ENCODE measurements at regions of chr2 and their contacts with region 1.

Region 1: GRCh38 chr2:187499941-187500532 is 52.0 kb upstream of the CALCRL start:
- DNase-seq: peak; percentile 54
- ATAC-seq: peak; percentile 82
- H3K4me3 ChIP-seq: no peak overlapping the region
- H3K27ac ChIP-seq: no peak overlapping the region
- H3K4me1 ChIP-seq: peaks cover 4 to 10% of the 10 kb centered on the region in 2 experiments; a peak in 2 of 4 replicates
- H3K27me3 ChIP-seq: no peaks in the 10 kb centered on the region
- CTCF ChIP-seq: peak; percentile 63 to 94 (median 78)
- POLR2A ChIP-seq: no peak
- RAD21 ChIP-seq: peak; percentile 97

Region 2: GRCh38 chr2:186903216-186903615 is 596.8 kb before region 1 on chr2:
- CTCF ChIA-PET with region 1: interaction called, 3 read pairs
- POLR2A ChIA-PET with region 1: no interaction called
- RAD21 ChIA-PET with region 1: no interaction called
- intact Hi-C with region 1: loop called (anchors 5 kb)
- DNase-seq: no peak
- ATAC-seq: no peak
- H3K4me3 ChIP-seq: no peak overlapping the region
- H3K27ac ChIP-seq: no peak overlapping the region
- H3K4me1 ChIP-seq: no peaks in the 10 kb centered on the region
- H3K27me3 ChIP-seq: no peaks in the 10 kb centered on the region
- CTCF ChIP-seq: peak; percentile 28 to 62 (median 33); a peak in 4 of 6 replicates
- POLR2A ChIP-seq: no peak
- RAD21 ChIP-seq: peak; percentile 60

Region 3: DNA sequence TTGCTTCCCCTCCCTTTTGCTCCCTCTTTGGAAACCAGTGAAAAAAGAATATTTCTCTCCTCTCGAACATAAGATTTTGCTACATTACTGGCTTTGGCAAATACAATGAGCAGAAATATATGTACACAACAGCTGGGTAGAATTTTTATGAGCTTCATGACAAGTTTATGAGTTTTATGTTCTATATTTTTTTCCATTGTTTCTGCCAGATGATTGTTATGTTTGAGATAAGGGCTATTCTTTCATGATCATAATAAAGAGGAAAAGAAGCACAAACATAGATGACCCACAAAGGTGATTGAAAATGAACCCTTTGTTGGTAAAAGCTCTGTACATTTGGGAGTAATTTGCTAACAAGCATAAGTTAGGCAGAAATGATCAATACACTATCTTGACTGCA is 69.0 kb after region 1 on chr2:
- CTCF ChIA-PET with region 1: interaction called, 412 read pairs
- POLR2A ChIA-PET with region 1: no interaction called
- RAD21 ChIA-PET with region 1: interaction called in 1 of 2 experiments, 4 read pairs
- intact Hi-C with region 1: no loop called
- DNase-seq: no peak
- ATAC-seq: no peak
- H3K4me3 ChIP-seq: no peak overlapping the region
- H3K27ac ChIP-seq: no peak overlapping the region
- H3K4me1 ChIP-seq: no peaks in the 10 kb centered on the region
- H3K27me3 ChIP-seq: no peaks in the 10 kb centered on the region
- CTCF ChIP-seq: no peak
- POLR2A ChIP-seq: no peak
- RAD21 ChIP-seq: no peak

Region 4: DNA sequence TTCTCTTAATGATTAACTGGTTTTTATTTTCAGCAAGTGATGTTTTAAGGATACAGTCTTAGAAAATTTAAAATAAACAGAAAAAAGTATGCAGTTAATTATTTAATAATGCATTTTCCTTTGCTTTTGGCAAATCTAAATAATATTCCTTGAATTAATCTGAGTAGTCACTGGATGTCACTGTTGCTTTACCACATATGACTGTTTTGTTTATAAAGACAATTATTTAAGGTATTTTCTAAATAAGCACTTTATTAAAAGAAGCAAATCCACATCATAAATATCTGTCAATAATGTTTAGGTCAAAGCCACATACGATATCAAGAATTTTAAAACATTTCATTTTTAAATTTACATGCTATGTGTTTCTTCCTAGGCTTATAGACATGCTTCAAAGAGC is 94.8 kb after region 1 on chr2:
- CTCF ChIA-PET with region 1: interaction called, 20 read pairs
- POLR2A ChIA-PET with region 1: no interaction called
- RAD21 ChIA-PET with region 1: interaction called in 1 of 2 experiments, 5 read pairs
- intact Hi-C with region 1: no loop called
- DNase-seq: no peak
- ATAC-seq: no peak
- H3K4me3 ChIP-seq: no peak overlapping the region
- H3K27ac ChIP-seq: no peak overlapping the region
- H3K4me1 ChIP-seq: no peaks in the 10 kb centered on the region
- H3K27me3 ChIP-seq: no peaks in the 10 kb centered on the region
- CTCF ChIP-seq: peak in 1 of 3 experiments; percentile 20; a peak in 2 of 6 replicates
- POLR2A ChIP-seq: no peak
- RAD21 ChIP-seq: peak; percentile 58

Region 5: DNA sequence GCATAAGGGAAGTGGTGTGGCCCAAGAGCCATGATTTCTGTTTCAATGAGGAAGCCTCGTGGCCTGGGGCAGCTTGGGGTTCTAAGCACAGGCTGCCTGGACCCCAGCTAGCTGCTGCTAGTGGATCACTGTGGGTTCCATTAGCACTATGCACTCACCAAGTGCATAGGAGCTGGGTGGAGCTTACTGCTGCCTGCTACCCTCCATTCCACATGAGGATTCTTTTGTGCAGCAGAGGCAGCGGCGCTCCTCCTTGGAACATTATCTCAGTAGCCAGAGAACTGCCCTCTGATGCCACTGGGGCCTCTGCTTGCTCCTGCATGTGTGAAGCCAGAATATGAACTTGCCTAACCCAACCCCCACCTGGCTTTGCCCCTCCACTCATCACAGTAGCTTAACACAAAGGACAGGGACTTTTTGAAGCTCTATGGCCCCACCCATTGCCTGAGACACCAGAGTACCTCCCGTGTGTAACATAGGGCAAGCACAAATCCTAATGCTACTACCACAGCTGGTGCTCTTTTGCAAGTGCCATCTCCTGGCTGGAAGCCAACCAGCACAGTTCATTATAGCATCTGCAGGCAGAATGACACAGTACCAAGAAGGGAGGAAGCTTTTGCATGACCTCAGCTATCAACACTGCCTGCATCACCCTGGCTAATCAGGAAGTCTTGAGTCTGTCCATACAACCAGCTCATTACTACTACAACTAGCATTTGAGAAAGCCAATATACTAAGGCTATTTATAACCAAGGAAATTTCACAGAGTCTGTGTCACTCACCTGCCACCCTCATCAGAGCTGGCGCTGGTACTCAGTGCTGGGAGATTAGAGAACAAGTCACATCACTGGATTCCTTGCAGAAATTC is 494.7 kb after region 1 on chr2:
- CTCF ChIA-PET with region 1: no interaction called
- POLR2A ChIA-PET with region 1: no interaction called
- RAD21 ChIA-PET with region 1: no interaction called
- intact Hi-C with region 1: no loop called
- DNase-seq: no peak
- ATAC-seq: no peak; the same call in 1 of the 2 replicates
- H3K4me3 ChIP-seq: no peak overlapping the region
- H3K27ac ChIP-seq: no peak overlapping the region
- H3K4me1 ChIP-seq: peaks cover 7 to 9% of the 10 kb centered on the region in 2 experiments; a peak in 3 of 4 replicates
- H3K27me3 ChIP-seq: no peaks in the 10 kb centered on the region
- CTCF ChIP-seq: no peak
- POLR2A ChIP-seq: no peak
- RAD21 ChIP-seq: no peak

Region 6: GRCh38 chr2:188369365-188369764 is 869.3 kb after region 1 on chr2:
- CTCF ChIA-PET with region 1: no interaction called
- POLR2A ChIA-PET with region 1: no interaction called
- RAD21 ChIA-PET with region 1: no interaction called
- intact Hi-C with region 1: loop called (anchors 10 kb)
- DNase-seq: peak; percentile 35
- ATAC-seq: peak; percentile 94
- H3K4me3 ChIP-seq: no peak overlapping the region
- H3K27ac ChIP-seq: no peak overlapping the region
- H3K4me1 ChIP-seq: peaks cover 0 to 14% of the 10 kb centered on the region in 2 experiments; a peak in 3 of 4 replicates
- H3K27me3 ChIP-seq: no peaks in the 10 kb centered on the region
- CTCF ChIP-seq: peak; percentile 56 to 72 (median 66); a peak in 5 of 6 replicates
- POLR2A ChIP-seq: no peak
- RAD21 ChIP-seq: peak; percentile 69

Region 7: DNA sequence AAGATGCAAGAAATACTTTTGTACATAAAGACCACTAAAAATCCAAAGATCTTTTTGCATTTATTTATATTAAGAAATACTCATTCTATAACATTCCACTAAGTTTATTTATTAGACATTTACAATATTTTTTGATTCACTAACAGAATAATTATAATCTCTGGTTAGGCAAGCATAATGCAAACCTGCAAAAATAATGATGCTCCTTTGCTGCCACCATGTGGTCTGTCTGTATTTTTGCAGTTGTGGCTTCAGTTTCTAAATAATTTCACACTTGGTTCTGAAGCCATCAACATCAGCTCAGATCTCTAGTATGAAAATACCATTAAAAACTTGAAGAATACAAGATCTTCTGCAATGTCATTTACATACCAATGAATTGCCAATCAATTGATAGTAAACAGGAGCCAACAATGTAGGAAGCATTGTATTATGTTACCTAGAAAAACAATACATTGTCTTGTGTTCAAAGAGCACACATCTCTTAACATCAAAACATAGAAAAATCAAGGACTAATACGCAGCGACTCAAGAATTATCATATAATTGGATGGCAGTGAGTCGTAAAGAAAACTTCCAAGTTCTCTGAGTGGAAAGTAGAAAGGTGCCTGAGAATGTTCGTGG is 1912.4 kb after region 1 on chr2:
- CTCF ChIA-PET with region 1: no interaction called
- POLR2A ChIA-PET with region 1: no interaction called
- RAD21 ChIA-PET with region 1: no interaction called
- intact Hi-C with region 1: loop called (anchors 10 kb)
- DNase-seq: peak; percentile 24
- ATAC-seq: peak; percentile 69
- H3K4me3 ChIP-seq: no peak overlapping the region
- H3K27ac ChIP-seq: no peak overlapping the region
- H3K4me1 ChIP-seq: no peaks in the 10 kb centered on the region
- H3K27me3 ChIP-seq: no peaks in the 10 kb centered on the region
- CTCF ChIP-seq: peak; percentile 48 to 80 (median 77); a peak in 5 of 6 replicates
- POLR2A ChIP-seq: no peak
- RAD21 ChIP-seq: peak; percentile 84